ENCODE measurements at regions of chr2 and their contacts with region 1.

Region 1: GRCh38 chr2:44955593-44956392 is 14.3 kb downstream of the SIX3 start:
- DNase-seq: peak; percentile 60
- H3K4me3 ChIP-seq: no peak overlapping the region
- H3K27ac ChIP-seq: no peak overlapping the region
- H3K4me1 ChIP-seq: peaks cover 16% of the 10 kb centered on the region
- H3K27me3 ChIP-seq: peaks cover 47 to 52% of the 10 kb centered on the region in 2 experiments
- CTCF ChIP-seq: peak; percentile 86 to 97
- POLR2A ChIP-seq: no peak

Region 2: GRCh38 chr2:43877782-43878464 is 1077.9 kb before region 1 on chr2:
- CTCF ChIA-PET with region 1: interaction called, 8 read pairs
- POLR2A ChIA-PET with region 1: no interaction called
- dilution Hi-C with region 1: no loop called
- intact Hi-C with region 1: loop called (anchors 10 kb)
- DNase-seq: peak; percentile 59
- H3K4me3 ChIP-seq: no peak overlapping the region
- H3K27ac ChIP-seq: no peak overlapping the region
- H3K4me1 ChIP-seq: no peaks in the 10 kb centered on the region
- H3K27me3 ChIP-seq: peaks cover 0 to 2% of the 10 kb centered on the region in 2 experiments
- CTCF ChIP-seq: peak; percentile 87 to 89
- POLR2A ChIP-seq: no peak

Region 3: GRCh38 chr2:44087036-44087713 is 868.6 kb before region 1 on chr2:
- CTCF ChIA-PET with region 1: interaction called, 3 read pairs
- POLR2A ChIA-PET with region 1: no interaction called
- dilution Hi-C with region 1: no loop called
- intact Hi-C with region 1: loop called (anchors 5 kb)
- DNase-seq: peak; percentile 85
- H3K4me3 ChIP-seq: peak overlapping the region in 2 of 3 experiments; percentile 15 to 45
- H3K27ac ChIP-seq: no peak overlapping the region
- H3K4me1 ChIP-seq: peaks cover 4% of the 10 kb centered on the region
- H3K27me3 ChIP-seq: peaks cover 19 to 27% of the 10 kb centered on the region in 2 experiments
- CTCF ChIP-seq: peak; percentile 92 to 95
- POLR2A ChIP-seq: no peak

Region 4: GRCh38 chr2:44244129-44244871 is 711.5 kb before region 1 on chr2:
- CTCF ChIA-PET with region 1: interaction called, 24 read pairs
- POLR2A ChIA-PET with region 1: no interaction called
- dilution Hi-C with region 1: no loop called
- intact Hi-C with region 1: loop called (anchors 1 kb)
- DNase-seq: peak; percentile 86
- H3K4me3 ChIP-seq: peak overlapping the region; percentile 3 to 59 (median 25)
- H3K27ac ChIP-seq: no peak overlapping the region
- H3K4me1 ChIP-seq: no peaks in the 10 kb centered on the region
- H3K27me3 ChIP-seq: peaks cover 2 to 7% of the 10 kb centered on the region in 2 experiments
- CTCF ChIP-seq: peak; percentile 36 to 46
- POLR2A ChIP-seq: no peak

Region 5: DNA sequence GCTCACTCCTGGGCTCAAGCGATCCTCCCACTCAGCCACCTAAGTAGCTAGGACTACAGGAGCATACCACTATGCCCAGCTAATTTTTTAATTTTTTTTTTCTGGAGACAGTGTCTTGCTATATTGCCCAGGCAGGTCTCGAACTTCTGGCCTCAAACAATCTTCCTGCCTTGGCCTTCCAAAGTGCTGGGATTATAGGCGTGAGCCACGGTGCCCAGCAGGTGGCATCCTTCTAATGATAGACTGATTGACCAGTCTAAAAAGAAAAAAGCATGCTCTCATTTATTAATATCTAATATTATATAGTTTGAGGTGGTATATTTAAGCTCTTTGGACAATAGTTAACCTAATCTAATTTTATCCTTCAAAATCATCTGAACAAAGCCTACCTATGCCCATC is 395.4 kb before region 1 on chr2:
- CTCF ChIA-PET with region 1: interaction called, 32 read pairs
- POLR2A ChIA-PET with region 1: no interaction called
- dilution Hi-C with region 1: no loop called
- intact Hi-C with region 1: loop called (anchors 2 kb)
- DNase-seq: peak; percentile 19
- H3K4me3 ChIP-seq: no peak overlapping the region
- H3K27ac ChIP-seq: no peak overlapping the region
- H3K4me1 ChIP-seq: peaks cover 6% of the 10 kb centered on the region
- H3K27me3 ChIP-seq: no peaks in the 10 kb centered on the region
- CTCF ChIP-seq: peak; percentile 26 to 30
- POLR2A ChIP-seq: no peak

Measured in endothelial cell of umbilical vein (primary cell).